ENCODE measurements at regions of chr17 and their contacts with region 1.

Region 1: GRCh38 chr17:19533718-19534561 is at the start of gene SLC47A1:
- DNase-seq: peak in 2 of 6 donors; percentile 66 to 73
- ATAC-seq: peak; percentile 58 to 81 (median 81)
- H3K4me3 ChIP-seq: peak within 1 kb of the TSS in 3 of 4 donors; percentile 21 to 48 (median 32)
- H3K27ac ChIP-seq: no peak within 1 kb of the TSS
- H3K4me1 ChIP-seq: peaks cover 0 to 8% (median 0%) of the 10 kb centered on the region in 3 donors
- H3K27me3 ChIP-seq: peaks cover 0 to 8% (median 0%) of the 10 kb centered on the region in 4 donors
- CTCF ChIP-seq: no peak
- total RNA-seq, gene SLC47A1: 0.12 to 0.97 (median 0.73) TPM in 5 of 6 donors, not detected in the other

Region 2: GRCh38 chr17:19630661-19631060 is 96.7 kb after region 1 on chr17:
- intact Hi-C with region 1: loop called in 1 of 3 experiments (anchors 10 kb)
- DNase-seq: no peak
- ATAC-seq: no peak
- H3K4me3 ChIP-seq: no peak overlapping the region
- H3K27ac ChIP-seq: no peak overlapping the region
- H3K4me1 ChIP-seq: no peaks in the 10 kb centered on the region
- H3K27me3 ChIP-seq: no peaks in the 10 kb centered on the region
- CTCF ChIP-seq: no peak

Measured in pancreas (tissue), 10 donors.